KBM-7 (cell line): ENCODE measurements at regions of chr7 and their contacts with region 1.

Region 1: GRCh38 chr7:28626624-28627262 is 214.4 kb downstream of the CREB5 start:
- DNase-seq: peak; percentile 39

Region 2: GRCh38 chr7:28853834-28854749 is 227.3 kb after region 1 on chr7:
- in situ Hi-C with region 1: loop called (anchors 25 kb)
- DNase-seq: peak; percentile 83